A549 (cell line): ENCODE measurements at regions of chr20 and their contacts with region 1.

Region 1: DNA sequence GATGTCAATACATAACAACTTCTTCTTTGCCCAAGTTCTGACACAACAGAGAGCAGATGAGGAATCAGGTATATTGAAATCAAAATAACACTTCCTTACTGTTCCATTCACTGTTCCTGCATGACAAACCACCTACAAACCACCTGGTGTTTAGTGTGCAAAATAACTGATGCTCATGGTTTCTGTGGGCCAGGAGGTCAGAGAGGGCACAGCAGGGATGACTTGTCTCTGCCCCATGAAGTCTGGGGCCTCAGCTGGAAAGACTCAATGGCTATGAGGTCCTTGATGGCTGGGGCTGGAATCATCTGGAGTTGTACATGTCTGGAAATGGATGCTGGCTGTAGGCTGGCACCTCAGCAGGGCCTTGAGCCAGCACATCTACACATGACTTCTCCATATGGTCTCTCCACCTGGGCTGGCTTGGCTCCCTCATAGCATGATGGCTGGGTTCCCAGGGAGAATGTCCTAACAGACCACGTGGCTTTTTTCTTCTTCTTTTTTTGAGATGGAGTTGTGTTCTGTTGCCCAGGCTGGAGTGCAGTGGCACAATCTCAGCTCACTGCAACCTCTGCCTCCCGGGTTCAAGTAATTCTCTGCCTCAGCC is 7.4 kb upstream of the COX4I2 start:
- DNase-seq: no peak
- ATAC-seq: no peak
- H3K4me3 ChIP-seq: no peak overlapping the region
- H3K27ac ChIP-seq: no peak overlapping the region
- H3K4me1 ChIP-seq: no peaks in the 10 kb centered on the region
- CTCF ChIP-seq: no peak
- EP300 ChIP-seq: no peak
- POLR2A ChIP-seq: no peak
- RAD21 ChIP-seq: no peak

Region 2: GRCh38 chr20:31494131-31494530 is 136.2 kb before region 1 on chr20:
- CTCF ChIA-PET with region 1: no interaction called
- POLR2A ChIA-PET with region 1: no interaction called
- DNase-seq: peak; percentile 43 to 61
- ATAC-seq: peak; percentile 61 to 78; a peak in 4 of 6 replicates
- H3K4me3 ChIP-seq: no peak overlapping the region
- H3K27ac ChIP-seq: no peak overlapping the region
- H3K4me1 ChIP-seq: no peaks in the 10 kb centered on the region
- CTCF ChIP-seq: peak; percentile 21; the same call in 1 of the 3 replicates
- EP300 ChIP-seq: no peak
- POLR2A ChIP-seq: no peak
- RAD21 ChIP-seq: no peak

Region 3: DNA sequence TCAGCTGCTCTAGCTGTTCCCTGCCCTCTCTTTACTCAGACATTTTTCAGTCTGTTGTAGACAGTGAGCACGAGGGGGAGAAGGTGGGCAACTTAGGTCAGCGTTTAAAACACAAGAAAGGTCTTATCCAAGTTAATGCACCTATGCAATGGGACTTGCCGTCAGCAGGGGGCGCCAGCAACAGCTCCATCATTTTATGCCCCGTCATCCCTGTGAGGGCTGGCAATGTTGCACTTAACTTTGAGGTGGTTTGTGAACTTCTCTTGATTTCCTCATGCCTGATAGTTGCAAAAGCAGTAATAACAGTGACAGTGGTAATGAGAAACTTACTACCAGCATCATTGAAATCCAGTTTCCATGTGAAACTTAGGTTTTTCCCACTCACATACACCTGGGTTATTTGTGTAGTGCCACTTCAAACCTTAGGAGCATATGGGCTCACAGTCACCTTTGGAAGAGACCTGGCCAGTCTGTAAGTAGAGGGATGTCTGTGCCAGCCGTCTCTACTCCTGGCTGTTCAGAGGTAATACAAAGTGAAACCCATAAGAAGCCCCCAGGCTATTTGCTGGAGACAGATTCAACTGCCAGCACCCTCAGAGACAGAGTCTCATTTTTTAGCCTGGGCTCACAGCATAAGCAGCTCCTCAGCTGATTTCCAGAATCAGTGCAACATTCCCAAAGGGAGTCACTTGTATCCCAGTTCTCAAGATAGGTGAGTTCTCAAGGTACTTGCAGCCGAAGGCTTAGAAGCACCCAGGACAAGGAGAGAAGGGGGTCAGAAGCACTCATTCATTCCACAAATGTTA is 70.0 kb before region 1 on chr20:
- CTCF ChIA-PET with region 1: interaction called, 44 read pairs
- POLR2A ChIA-PET with region 1: interaction called, 8 read pairs
- DNase-seq: peak; percentile 78 to 94
- ATAC-seq: peak; percentile 56 to 70
- H3K4me3 ChIP-seq: no peak overlapping the region
- H3K27ac ChIP-seq: peak overlapping the region; percentile 90 to 97
- H3K4me1 ChIP-seq: peaks cover 48% of the 10 kb centered on the region
- CTCF ChIP-seq: peak; percentile 95
- EP300 ChIP-seq: no peak
- POLR2A ChIP-seq: no peak
- RAD21 ChIP-seq: peak; percentile 65 to 66

Region 4: GRCh38 chr20:31605031-31605901 is 25.0 kb before region 1 on chr20 and contains the start of gene ID1:
- CTCF ChIA-PET with region 1: interaction called, 59 read pairs
- POLR2A ChIA-PET with region 1: interaction called, 7 read pairs
- DNase-seq: peak; percentile 91 to 98
- ATAC-seq: peak; percentile 51 to 62
- H3K4me3 ChIP-seq: peak within 1 kb of the TSS; percentile 93
- H3K27ac ChIP-seq: peak within 1 kb of the TSS; percentile 97 to 98
- H3K4me1 ChIP-seq: peaks cover 51% of the 10 kb centered on the region
- CTCF ChIP-seq: no peak
- EP300 ChIP-seq: no peak
- POLR2A ChIP-seq: peak; percentile 92
- RAD21 ChIP-seq: peak in 1 of 2 experiments; percentile 18; a peak in 2 of 5 replicates
- polyA plus RNA-seq, gene ID1: 237 and 250 TPM in 2 replicates

Region 5: DNA sequence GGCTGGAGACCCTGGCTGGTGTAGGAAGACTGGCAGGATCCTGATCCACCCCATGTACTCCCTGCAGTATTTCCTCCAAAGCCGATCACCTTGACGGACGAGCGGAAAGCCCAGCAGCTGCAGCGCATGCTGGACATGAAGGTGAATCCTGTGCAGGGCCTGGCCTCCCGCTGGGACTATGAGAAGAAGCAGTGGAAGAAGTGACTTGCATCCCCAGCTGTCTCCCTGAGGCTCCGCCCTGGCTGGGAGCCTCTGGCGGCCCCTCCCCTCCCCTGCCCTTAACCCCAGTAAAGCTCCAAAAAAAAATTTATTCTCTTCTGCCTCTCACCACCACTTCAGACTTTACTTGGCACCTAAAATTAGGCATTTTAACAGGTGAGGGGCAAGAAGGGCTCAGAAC is 14.4 kb after region 1 on chr20:
- CTCF ChIA-PET with region 1: interaction called, 63 read pairs
- POLR2A ChIA-PET with region 1: no interaction called
- DNase-seq: no peak
- ATAC-seq: peak in 1 of 2 experiments; percentile 51; a peak in 3 of 6 replicates
- H3K4me3 ChIP-seq: no peak overlapping the region
- H3K27ac ChIP-seq: no peak overlapping the region
- H3K4me1 ChIP-seq: no peaks in the 10 kb centered on the region
- CTCF ChIP-seq: no peak
- EP300 ChIP-seq: no peak
- POLR2A ChIP-seq: no peak
- RAD21 ChIP-seq: no peak

Region 6: DNA sequence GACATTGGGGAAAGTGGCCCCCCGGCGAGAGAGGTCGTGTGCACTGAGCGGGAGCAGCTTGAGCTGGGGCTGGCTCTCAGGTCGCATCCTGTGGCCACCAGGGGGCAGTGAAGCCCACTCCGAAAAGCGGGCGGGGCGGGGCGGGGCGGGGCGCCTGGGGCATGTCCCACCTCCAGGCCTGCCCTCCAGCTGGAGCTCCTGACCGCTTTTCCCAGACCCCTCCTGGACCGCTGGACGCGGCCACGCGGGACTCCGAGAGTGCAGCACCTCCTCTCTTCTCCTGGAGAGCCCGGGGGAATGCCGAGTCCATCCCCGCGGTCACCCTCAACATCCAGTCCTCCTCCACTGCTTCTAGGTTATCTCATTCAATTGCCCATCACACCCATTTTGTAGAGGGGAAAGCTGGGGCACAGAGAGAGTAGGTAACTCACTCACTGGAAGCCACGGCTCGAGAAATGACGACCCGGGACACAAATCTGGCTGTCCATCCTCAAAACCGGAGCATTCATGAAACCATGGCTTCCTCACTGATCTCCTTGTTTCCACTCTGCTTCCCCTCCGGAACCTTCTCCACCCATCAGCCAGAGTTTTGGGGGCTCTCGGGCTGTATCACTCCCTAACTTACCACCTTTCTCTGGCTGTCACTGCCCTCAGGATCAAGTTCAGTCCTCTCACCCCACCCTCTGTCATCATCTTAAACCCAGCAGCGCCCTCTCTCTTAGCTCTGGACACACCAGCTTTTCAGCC is 31.5 kb after region 1 on chr20:
- CTCF ChIA-PET with region 1: interaction called, 91 read pairs
- POLR2A ChIA-PET with region 1: interaction called, 4 read pairs
- DNase-seq: peak; percentile 68 to 83
- ATAC-seq: peak; percentile 72 to 84
- H3K4me3 ChIP-seq: peak overlapping the region; percentile 32
- H3K27ac ChIP-seq: peak overlapping the region; percentile 85 to 88
- H3K4me1 ChIP-seq: peaks cover 60% of the 10 kb centered on the region
- CTCF ChIP-seq: peak; percentile 58
- EP300 ChIP-seq: no peak
- POLR2A ChIP-seq: peak; percentile 38
- RAD21 ChIP-seq: peak; percentile 64 to 85

Region 7: DNA sequence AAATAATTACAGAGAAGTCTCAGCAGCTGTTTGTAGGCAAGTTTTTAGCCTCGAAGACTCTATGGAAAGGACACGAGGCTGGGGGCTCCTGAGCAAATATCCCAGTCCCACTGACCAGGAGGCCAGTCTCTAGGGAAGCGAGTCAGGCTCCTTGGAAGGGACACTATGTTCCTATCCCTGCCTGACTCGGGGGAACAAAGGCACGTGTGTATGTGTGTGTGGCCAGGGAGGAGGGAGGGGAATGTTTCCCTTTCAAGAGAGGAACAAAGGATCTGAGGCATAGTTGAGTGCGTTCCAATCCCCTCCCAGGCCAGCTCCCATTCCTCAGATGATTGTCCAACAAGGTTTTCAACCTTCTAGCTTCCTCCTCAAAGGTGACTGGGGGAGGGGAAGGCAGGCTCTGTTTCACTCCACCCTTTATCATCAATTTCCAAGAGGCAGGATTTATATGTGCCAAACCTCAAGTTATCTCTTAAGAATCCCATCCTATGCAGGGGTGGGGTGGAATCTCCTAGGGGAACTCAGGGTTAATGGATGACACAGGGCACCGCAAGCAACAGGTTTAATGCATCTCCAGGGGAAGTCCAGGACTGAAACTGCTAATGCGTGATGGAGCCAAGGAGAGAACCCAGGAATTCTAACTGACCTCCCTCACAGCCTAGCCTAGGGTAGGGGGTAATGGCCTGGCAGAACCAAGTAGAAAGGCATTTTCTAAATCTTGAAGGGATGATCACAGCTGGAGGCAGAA is 82.4 kb after region 1 on chr20:
- CTCF ChIA-PET with region 1: interaction called, 13 read pairs
- POLR2A ChIA-PET with region 1: no interaction called
- DNase-seq: peak; percentile 80 to 95
- ATAC-seq: peak; percentile 63 to 77
- H3K4me3 ChIP-seq: peak overlapping the region; percentile 13; the same call in 1 of the 3 replicates
- H3K27ac ChIP-seq: peak overlapping the region; percentile 95 to 96
- H3K4me1 ChIP-seq: peaks cover 96% of the 10 kb centered on the region
- CTCF ChIP-seq: no peak
- EP300 ChIP-seq: peak; percentile 82 to 96; a peak in 4 of 5 replicates
- POLR2A ChIP-seq: no peak
- RAD21 ChIP-seq: peak; percentile 1 to 29; a peak in 1 of 5 replicates